ENCODE measurements at regions of chr15 and their contacts with region 1.

Region 1: GRCh38 chr15:34101366-34102175 is at the starts of genes EMC7 and PGBD4:
- DNase-seq: peak; percentile 98
- ATAC-seq: peak; percentile 98
- H3K4me3 Mint-ChIP-seq: peak within 1 kb of the TSS; percentile 99
- H3K27ac Mint-ChIP-seq: peak within 1 kb of the TSS; percentile 98
- H3K4me1 Mint-ChIP-seq: peaks cover 43% of the 10 kb centered on the region
- H3K27me3 Mint-ChIP-seq: no peaks in the 10 kb centered on the region
- CTCF ChIP-seq: no peak
- total RNA-seq, gene EMC7: 29.8 and 31.9 TPM in 2 replicates
- total RNA-seq, gene PGBD4: 4.8 and 5.3 TPM in 2 replicates

Region 2: GRCh38 chr15:34038023-34038870 is 63.3 kb before region 1 on chr15:
- CTCF ChIA-PET with region 1: no interaction called
- POLR2A ChIA-PET with region 1: interaction called, 14 read pairs
- intact Hi-C with region 1: loop called (anchors 1 kb)
- DNase-seq: peak; percentile 71
- ATAC-seq: peak; percentile 79
- H3K4me3 Mint-ChIP-seq: peak overlapping the region; percentile 92
- H3K27ac Mint-ChIP-seq: peak overlapping the region; percentile 89
- H3K4me1 Mint-ChIP-seq: peaks cover 18% of the 10 kb centered on the region
- H3K27me3 Mint-ChIP-seq: no peaks in the 10 kb centered on the region
- CTCF ChIP-seq: no peak

Region 3: GRCh38 chr15:34154725-34155204 is 53.2 kb after region 1 on chr15:
- CTCF ChIA-PET with region 1: no interaction called
- POLR2A ChIA-PET with region 1: no interaction called
- intact Hi-C with region 1: loop called (anchors 5 kb)
- DNase-seq: no peak
- ATAC-seq: peak; percentile 68
- H3K4me3 Mint-ChIP-seq: no peak overlapping the region
- H3K27ac Mint-ChIP-seq: peak overlapping the region; percentile 80
- H3K4me1 Mint-ChIP-seq: peaks cover 7% of the 10 kb centered on the region
- H3K27me3 Mint-ChIP-seq: no peaks in the 10 kb centered on the region
- CTCF ChIP-seq: no peak

Region 4: GRCh38 chr15:34223904-34224596 is 122.5 kb after region 1 on chr15:
- CTCF ChIA-PET with region 1: no interaction called
- POLR2A ChIA-PET with region 1: interaction called, 32 read pairs
- intact Hi-C with region 1: loop called (anchors 1 kb)
- DNase-seq: no peak
- ATAC-seq: peak; percentile 7
- H3K4me3 Mint-ChIP-seq: peak overlapping the region; percentile 92
- H3K27ac Mint-ChIP-seq: peak overlapping the region; percentile 96
- H3K4me1 Mint-ChIP-seq: peaks cover 27% of the 10 kb centered on the region
- H3K27me3 Mint-ChIP-seq: peaks cover 1% of the 10 kb centered on the region
- CTCF ChIP-seq: no peak

Region 5: DNA sequence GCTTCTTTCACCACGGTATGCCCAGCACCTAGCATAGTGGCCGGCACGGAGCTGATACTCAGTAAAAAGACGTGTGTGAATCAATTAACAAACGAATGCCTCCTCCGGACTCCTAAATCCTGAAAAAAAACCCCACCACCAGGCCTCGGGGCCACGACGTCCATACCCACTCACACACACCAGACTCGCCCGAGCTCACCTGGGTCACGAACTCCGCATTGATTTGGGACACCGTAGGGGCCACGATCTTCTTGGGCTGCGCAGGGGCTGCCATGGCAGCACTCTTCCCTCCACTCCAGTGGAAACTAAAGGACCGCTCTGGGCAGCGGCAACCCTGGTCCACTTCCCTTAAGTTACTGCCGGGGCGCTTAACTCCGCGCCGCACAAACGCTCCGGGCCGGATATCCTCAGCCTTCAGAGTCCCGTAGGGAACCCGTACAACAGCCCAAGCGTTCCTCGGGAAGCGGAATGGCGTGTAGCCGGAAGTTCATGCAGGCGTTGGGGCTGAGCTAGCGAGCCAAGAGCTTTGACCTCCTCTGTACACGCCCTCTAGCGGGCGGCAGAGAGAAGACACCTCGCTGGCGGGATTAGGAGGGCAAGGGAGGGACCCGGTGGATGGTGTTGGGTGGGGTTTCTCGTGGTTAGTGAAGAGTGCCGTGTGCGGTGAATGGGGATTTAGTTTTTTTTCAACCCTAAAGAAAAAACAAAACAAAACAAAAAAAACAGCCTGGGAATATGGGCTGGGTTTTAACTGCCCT is 867.9 kb after region 1 on chr15 and contains the start of gene AQR:
- CTCF ChIA-PET with region 1: no interaction called
- POLR2A ChIA-PET with region 1: interaction called, 4 read pairs
- intact Hi-C with region 1: loop called (anchors 5 kb)
- DNase-seq: peak; percentile 75
- ATAC-seq: peak; percentile 98
- H3K4me3 Mint-ChIP-seq: peak within 1 kb of the TSS; percentile 98
- H3K27ac Mint-ChIP-seq: peak within 1 kb of the TSS; percentile 93
- H3K4me1 Mint-ChIP-seq: peaks cover 35% of the 10 kb centered on the region
- H3K27me3 Mint-ChIP-seq: no peaks in the 10 kb centered on the region
- CTCF ChIP-seq: no peak
- total RNA-seq, gene AQR: 43.3 and 48.6 TPM in 2 replicates

Region 6: GRCh38 chr15:35545824-35546510 is 1444.4 kb after region 1 on chr15 and contains the start of gene DPH6:
- CTCF ChIA-PET with region 1: no interaction called
- POLR2A ChIA-PET with region 1: interaction called, 5 read pairs
- intact Hi-C with region 1: loop called (anchors 10 kb)
- DNase-seq: peak; percentile 84
- ATAC-seq: peak; percentile 82
- H3K4me3 Mint-ChIP-seq: peak within 1 kb of the TSS; percentile 93
- H3K27ac Mint-ChIP-seq: peak within 1 kb of the TSS; percentile 92
- H3K4me1 Mint-ChIP-seq: peaks cover 30% of the 10 kb centered on the region
- H3K27me3 Mint-ChIP-seq: no peaks in the 10 kb centered on the region
- CTCF ChIP-seq: no peak
- total RNA-seq, gene DPH6: 18.8 and 20.8 TPM in 2 replicates